HepG2 (cell line): ENCODE measurements at regions of chr7 and their contacts with region 1.

Region 1: GRCh38 chr7:108805808-108806397 is 236.2 kb downstream of the DNAJB9 start:
- DNase-seq: peak; percentile 5
- ATAC-seq: peak; percentile 54; the same call in 2 of the 3 replicates
- H3K4me3 ChIP-seq: no peak overlapping the region
- H3K27ac ChIP-seq: no peak overlapping the region
- H3K4me1 ChIP-seq: no peaks in the 10 kb centered on the region
- H3K27me3 ChIP-seq: no peaks in the 10 kb centered on the region; a peak in 1 of 5 replicates
- CTCF ChIP-seq: peak; percentile 47
- EP300 ChIP-seq: no peak
- POLR2A ChIP-seq: no peak
- RAD21 ChIP-seq: no peak

Region 2: GRCh38 chr7:108613112-108613759 is 192.7 kb before region 1 on chr7:
- CTCF ChIA-PET with region 1: no interaction called
- POLR2A ChIA-PET with region 1: no interaction called
- in situ Hi-C with region 1: no loop called
- intact Hi-C with region 1: loop called (anchors 5 kb)
- DNase-seq: peak; percentile 32
- ATAC-seq: peak; percentile 69
- H3K4me3 ChIP-seq: no peak overlapping the region; a peak in 1 of 6 replicates
- H3K27ac ChIP-seq: no peak overlapping the region
- H3K4me1 ChIP-seq: peaks cover 19% of the 10 kb centered on the region
- H3K27me3 ChIP-seq: no peaks in the 10 kb centered on the region
- CTCF ChIP-seq: peak; percentile 63
- EP300 ChIP-seq: no peak
- POLR2A ChIP-seq: no peak
- RAD21 ChIP-seq: no peak